ENCODE measurements at regions of chr1 and their contacts with region 1.

Region 1: GRCh38 chr1:205485338-205486228 is 18.9 kb upstream of the CDK18 start:
- DNase-seq: peak; percentile 85
- H3K4me3 Mint-ChIP-seq: no peak overlapping the region
- H3K27ac Mint-ChIP-seq: no peak overlapping the region
- H3K4me1 Mint-ChIP-seq: peaks cover 32% of the 10 kb centered on the region
- H3K27me3 Mint-ChIP-seq: peaks cover 73% of the 10 kb centered on the region
- CTCF ChIP-seq: peak; percentile 99

Region 2: GRCh38 chr1:205354259-205354904 is 131.2 kb before region 1 on chr1:
- CTCF ChIA-PET with region 1: interaction called, 43 read pairs
- intact Hi-C with region 1: loop called (anchors 1 kb)
- DNase-seq: peak; percentile 74
- H3K4me3 Mint-ChIP-seq: no peak overlapping the region
- H3K27ac Mint-ChIP-seq: no peak overlapping the region
- H3K4me1 Mint-ChIP-seq: peaks cover 25% of the 10 kb centered on the region
- H3K27me3 Mint-ChIP-seq: peaks cover 26% of the 10 kb centered on the region
- CTCF ChIP-seq: peak; percentile 88

Region 3: DNA sequence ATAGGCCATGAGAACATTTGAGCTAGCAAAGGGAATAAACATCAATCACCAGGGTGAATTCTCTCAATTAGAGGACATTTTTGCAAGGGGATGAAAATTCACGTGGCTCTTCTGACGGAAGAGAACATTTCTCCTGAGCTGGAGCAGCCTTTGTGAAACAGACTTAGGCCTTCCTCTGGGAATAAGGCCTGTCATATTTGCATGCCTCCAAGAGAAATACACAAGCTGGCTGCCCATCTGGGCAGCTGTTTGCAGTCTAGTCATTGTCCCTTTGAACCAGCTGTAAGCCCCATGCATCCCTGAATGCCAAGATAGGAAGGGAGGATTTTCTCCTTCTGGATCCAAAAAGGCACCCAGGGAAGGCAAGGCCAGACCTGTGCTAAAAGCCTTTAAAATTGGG is 69.3 kb before region 1 on chr1:
- CTCF ChIA-PET with region 1: interaction called, 10 read pairs
- intact Hi-C with region 1: no loop called
- DNase-seq: no peak
- H3K4me3 Mint-ChIP-seq: no peak overlapping the region
- H3K27ac Mint-ChIP-seq: no peak overlapping the region
- H3K4me1 Mint-ChIP-seq: no peaks in the 10 kb centered on the region
- H3K27me3 Mint-ChIP-seq: peaks cover 41% of the 10 kb centered on the region
- CTCF ChIP-seq: no peak

Region 4: GRCh38 chr1:205430696-205431305 is 54.8 kb before region 1 on chr1:
- CTCF ChIA-PET with region 1: interaction called, 33 read pairs
- intact Hi-C with region 1: no loop called
- DNase-seq: peak; percentile 76
- H3K4me3 Mint-ChIP-seq: peak overlapping the region; percentile 63
- H3K27ac Mint-ChIP-seq: peak overlapping the region; percentile 13
- H3K4me1 Mint-ChIP-seq: peaks cover 8% of the 10 kb centered on the region
- H3K27me3 Mint-ChIP-seq: peaks cover 65% of the 10 kb centered on the region
- CTCF ChIP-seq: peak; percentile 94

Region 5: DNA sequence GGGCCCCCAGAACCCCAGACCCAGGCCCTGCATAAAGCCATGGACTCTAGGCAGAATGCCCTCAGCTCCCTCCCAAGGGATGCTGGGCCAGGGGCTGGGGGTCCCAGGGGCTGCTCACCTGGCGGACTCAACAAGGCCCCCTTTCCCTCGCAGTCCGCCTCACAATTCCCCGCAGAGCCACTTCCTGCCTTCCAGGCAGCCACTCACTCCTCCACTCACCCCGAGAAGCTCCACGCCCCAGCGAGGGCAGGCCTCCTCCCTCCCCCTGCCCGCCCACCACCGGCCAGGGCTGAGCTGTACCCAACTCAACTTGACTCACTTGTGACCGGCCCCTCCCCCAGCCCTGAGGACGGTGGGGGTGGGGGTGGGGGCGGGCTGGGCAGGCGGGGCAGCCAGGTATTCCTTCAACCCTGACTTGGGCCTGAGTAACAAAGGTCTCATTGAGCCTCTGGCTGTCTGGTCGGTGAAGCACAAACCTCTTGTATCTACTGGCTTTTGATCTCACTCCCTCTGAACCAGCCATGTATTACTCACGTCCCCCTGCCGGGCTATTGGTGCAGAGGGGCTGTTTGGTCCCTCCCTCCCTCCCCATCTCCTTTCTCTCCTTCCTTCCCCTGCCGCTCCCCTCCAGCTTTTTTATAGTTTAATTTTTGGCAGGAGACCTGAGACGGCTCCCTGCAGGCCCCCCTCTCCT is 35.7 kb before region 1 on chr1:
- CTCF ChIA-PET with region 1: interaction called, 38 read pairs
- intact Hi-C with region 1: no loop called
- DNase-seq: peak; percentile 97
- H3K4me3 Mint-ChIP-seq: peak overlapping the region; percentile 100
- H3K27ac Mint-ChIP-seq: peak overlapping the region; percentile 98
- H3K4me1 Mint-ChIP-seq: peaks cover 50% of the 10 kb centered on the region
- H3K27me3 Mint-ChIP-seq: peaks cover 22% of the 10 kb centered on the region
- CTCF ChIP-seq: no peak

Region 6: GRCh38 chr1:205523891-205524793 is 38.6 kb after region 1 on chr1:
- CTCF ChIA-PET with region 1: interaction called, 52 read pairs
- intact Hi-C with region 1: loop called (anchors 1 kb)
- DNase-seq: peak; percentile 87
- H3K4me3 Mint-ChIP-seq: no peak overlapping the region
- H3K27ac Mint-ChIP-seq: no peak overlapping the region
- H3K4me1 Mint-ChIP-seq: peaks cover 10% of the 10 kb centered on the region
- H3K27me3 Mint-ChIP-seq: no peaks in the 10 kb centered on the region
- CTCF ChIP-seq: peak; percentile 90

Region 7: DNA sequence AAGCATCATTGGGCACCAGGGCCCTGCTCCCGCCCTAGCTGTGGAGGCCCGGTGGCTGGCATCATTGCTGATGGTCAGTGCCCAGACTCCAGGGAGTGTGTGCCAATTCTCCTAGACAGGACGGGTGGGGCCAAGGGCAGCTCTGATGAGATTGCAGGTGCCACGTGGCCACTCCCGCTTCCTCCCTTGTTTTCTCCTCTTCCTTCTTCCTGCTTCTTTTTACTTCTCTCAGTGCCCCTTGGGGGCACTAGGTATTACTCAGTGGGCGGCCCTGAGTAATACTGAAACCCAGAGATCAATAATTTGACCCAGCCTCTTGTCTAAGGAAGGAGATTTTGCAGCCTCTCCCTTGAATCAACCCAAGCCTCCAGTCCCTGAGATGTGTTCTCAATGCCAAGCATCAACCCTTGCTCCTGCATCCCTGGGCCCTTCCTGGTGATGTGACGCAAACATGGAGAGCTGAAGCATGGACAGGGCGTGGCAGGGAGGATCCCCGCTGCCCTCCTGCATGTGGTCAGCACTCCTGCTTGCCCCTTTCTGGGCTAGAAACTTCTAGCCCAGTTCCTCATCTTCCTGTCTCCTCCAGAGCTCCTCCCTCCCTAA is 51.3 kb after region 1 on chr1:
- CTCF ChIA-PET with region 1: no interaction called
- intact Hi-C with region 1: no loop called
- DNase-seq: peak; percentile 80
- H3K4me3 Mint-ChIP-seq: peak overlapping the region; percentile 0
- H3K27ac Mint-ChIP-seq: peak overlapping the region; percentile 7
- H3K4me1 Mint-ChIP-seq: peaks cover 28% of the 10 kb centered on the region
- H3K27me3 Mint-ChIP-seq: no peaks in the 10 kb centered on the region
- CTCF ChIP-seq: no peak